ENCODE measurements at regions of chr4 and their contacts with region 1.

Region 1: DNA sequence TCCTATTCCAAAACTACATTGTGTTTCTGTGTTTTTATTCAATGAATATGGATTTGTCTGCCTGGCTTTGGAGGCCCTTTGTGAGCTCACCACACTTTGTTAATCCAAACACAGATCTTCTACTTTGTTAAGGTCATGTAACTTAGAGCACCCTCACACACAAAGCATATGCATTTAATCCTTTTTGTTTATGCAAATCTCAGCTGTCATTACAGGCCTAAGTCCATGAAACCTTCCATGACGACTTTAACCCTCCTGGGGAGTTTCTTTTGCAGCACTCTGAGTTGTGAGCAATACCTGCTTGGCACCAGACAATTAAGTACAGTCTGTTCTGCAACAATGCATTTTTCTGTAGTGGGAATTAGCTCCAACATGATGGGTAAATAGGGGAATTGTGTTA is 14.9 kb downstream of the CCSER1 start:
- DNase-seq: no peak
- H3K4me3 ChIP-seq: no peak overlapping the region
- H3K27ac ChIP-seq: no peak overlapping the region
- H3K4me1 ChIP-seq: no peaks in the 10 kb centered on the region
- H3K27me3 ChIP-seq: no peaks in the 10 kb centered on the region
- CTCF ChIP-seq: no peak

Region 2: DNA sequence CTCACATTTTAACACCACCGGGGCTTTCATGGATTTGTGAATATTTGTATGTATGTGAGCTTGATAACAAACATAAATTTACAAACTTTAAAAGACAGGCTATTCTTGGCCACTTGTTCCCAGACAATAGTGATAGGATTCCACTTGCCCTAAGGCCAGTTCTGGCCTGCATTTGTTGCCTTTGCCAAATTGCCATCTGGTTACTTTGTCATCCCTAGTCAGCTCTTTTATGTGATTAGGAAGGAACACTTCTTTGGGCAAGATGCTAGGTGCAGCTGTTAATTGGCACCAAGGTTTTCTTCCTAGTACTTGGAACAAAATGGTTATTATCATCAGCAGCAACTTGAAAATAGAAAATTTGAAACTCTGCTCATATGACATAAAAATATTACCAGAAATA is 48.4 kb after region 1 on chr4:
- CTCF ChIA-PET with region 1: no interaction called
- dilution Hi-C with region 1: no loop called
- in situ Hi-C with region 1: no loop called
- intact Hi-C with region 1: loop called (anchors 5 kb)
- DNase-seq: no peak
- H3K4me3 ChIP-seq: no peak overlapping the region
- H3K27ac ChIP-seq: no peak overlapping the region
- H3K4me1 ChIP-seq: no peaks in the 10 kb centered on the region
- H3K27me3 ChIP-seq: peaks cover 2% of the 10 kb centered on the region
- CTCF ChIP-seq: no peak